Panc1 (cell line): ENCODE measurements at regions of chr3 and their contacts with region 1.

Region 1: DNA sequence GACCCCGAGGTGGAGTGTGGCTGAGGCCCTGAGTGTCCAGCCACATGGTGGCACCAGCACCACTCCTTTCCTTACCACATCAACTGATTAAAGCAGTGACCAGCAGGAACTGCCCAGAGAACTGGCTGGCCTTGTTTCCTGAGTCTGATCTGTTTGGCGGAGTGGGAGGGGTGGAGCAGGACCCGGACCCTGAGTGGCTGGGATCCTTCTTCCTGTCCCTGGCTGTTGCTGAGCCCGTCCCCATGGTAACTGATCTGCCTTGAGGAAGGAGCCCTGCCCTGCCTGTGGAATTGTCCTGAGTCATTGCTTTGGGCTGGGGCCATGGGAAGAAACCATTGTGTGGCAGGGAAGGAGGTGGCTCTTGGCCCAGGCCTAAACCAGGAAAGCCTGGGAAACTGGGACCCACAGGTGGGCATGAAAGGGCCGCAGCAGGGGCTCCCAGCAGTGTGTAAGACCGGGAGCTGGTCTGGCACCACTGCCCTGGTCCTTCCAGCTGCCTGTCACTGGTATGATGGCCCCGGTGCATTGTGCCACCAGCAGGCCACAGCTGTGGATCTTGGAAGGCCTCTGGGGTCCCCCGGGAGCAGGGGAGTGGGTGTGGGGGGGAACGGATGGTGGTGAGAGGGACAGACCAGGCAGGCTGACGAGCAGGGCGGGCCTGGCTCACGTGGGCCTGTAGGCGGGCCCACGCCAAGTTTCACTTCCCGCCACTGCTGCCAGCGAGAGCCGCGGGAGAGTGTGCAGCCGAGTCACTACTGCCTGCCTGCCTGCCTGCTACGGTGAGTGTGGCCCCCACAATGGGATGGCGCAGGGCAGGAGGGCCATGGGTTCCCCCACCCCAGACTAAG is 19.2 kb downstream of the ATRIP start:
- DNase-seq: peak; percentile 80
- ATAC-seq: peak; percentile 79
- H3K4me3 ChIP-seq: peak overlapping the region; percentile 1 to 18; a peak in 2 of 4 replicates
- H3K27ac ChIP-seq: peak overlapping the region; percentile 65
- H3K4me1 ChIP-seq: peaks cover 10% of the 10 kb centered on the region
- H3K27me3 ChIP-seq: no peaks in the 10 kb centered on the region
- CTCF ChIP-seq: peak; percentile 79

Region 2: GRCh38 chr3:48446425-48447193 is 19.1 kb before region 1 on chr3 and contains the start of gene ATRIP:
- CTCF ChIA-PET with region 1: no interaction called
- POLR2A ChIA-PET with region 1: interaction called, 23 read pairs
- in situ Hi-C with region 1: no loop called
- intact Hi-C with region 1: no loop called
- DNase-seq: no peak
- ATAC-seq: peak; percentile 95
- H3K4me3 ChIP-seq: peak within 1 kb of the TSS; percentile 76 to 87
- H3K27ac ChIP-seq: peak within 1 kb of the TSS; percentile 89
- H3K4me1 ChIP-seq: peaks cover 11% of the 10 kb centered on the region
- H3K27me3 ChIP-seq: no peaks in the 10 kb centered on the region
- CTCF ChIP-seq: no peak
- total RNA-seq, gene ATRIP: 11.9 TPM

Region 3: GRCh38 chr3:48548729-48549705 is 83.3 kb after region 1 on chr3:
- CTCF ChIA-PET with region 1: interaction called, 5 read pairs
- POLR2A ChIA-PET with region 1: no interaction called
- in situ Hi-C with region 1: no loop called
- intact Hi-C with region 1: loop called (anchors 5 kb)
- DNase-seq: no peak
- ATAC-seq: peak; percentile 98
- H3K4me3 ChIP-seq: no peak overlapping the region
- H3K27ac ChIP-seq: no peak overlapping the region
- H3K4me1 ChIP-seq: no peaks in the 10 kb centered on the region
- H3K27me3 ChIP-seq: no peaks in the 10 kb centered on the region
- CTCF ChIP-seq: peak; percentile 90

Region 4: DNA sequence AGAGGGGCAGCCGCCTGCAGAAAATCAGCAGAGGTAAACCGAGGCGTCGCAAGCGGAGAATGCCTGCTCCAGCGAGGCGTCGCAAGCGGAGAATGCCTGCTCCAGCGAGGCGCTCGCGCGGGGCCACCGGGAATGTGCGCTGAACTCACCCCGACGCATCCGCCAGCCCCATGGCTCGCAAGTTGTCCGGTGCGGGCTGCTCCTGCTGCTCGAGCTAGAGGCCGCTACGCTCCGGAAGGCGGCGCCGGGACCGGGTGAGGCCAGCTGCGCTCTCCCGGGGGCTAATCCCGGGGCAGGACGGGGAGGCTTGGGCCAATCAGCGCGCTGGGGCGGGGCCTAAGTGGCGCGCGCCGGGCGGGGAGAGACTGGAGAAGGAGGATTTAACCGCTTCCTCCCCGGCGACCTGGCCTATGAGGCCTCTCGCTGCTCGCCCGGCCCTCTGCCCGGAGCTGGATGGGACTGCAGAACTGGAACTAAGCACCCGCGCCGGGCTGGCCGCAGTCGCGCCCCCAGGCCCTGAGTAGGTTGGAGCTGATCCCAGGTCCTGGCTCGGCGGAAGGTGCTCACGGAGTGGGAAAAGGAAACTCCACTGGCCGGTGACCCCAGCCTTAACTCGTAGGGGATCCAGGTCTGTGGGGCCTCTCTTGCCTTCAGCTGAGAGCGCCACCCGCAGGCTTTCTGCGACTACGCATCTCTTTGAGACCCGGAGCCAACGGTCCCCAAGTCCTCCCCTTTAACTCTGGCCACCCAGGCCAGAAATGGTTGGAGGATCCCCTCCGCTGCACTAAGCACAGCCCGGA is 169.7 kb after region 1 on chr3 and contains the start of gene SLC26A6:
- CTCF ChIA-PET with region 1: no interaction called
- POLR2A ChIA-PET with region 1: no interaction called
- in situ Hi-C with region 1: no loop called
- intact Hi-C with region 1: no loop called
- DNase-seq: peak; percentile 56
- ATAC-seq: peak; percentile 97
- H3K4me3 ChIP-seq: peak within 1 kb of the TSS; percentile 74 to 85
- H3K27ac ChIP-seq: peak within 1 kb of the TSS; percentile 87
- H3K4me1 ChIP-seq: peaks cover 18% of the 10 kb centered on the region
- H3K27me3 ChIP-seq: no peaks in the 10 kb centered on the region
- CTCF ChIP-seq: peak; percentile 78
- total RNA-seq, gene SLC26A6: 36.3 TPM

Region 5: GRCh38 chr3:49719214-49719884 is 1253.6 kb after region 1 on chr3 and contains the start of gene AMIGO3:
- CTCF ChIA-PET with region 1: no interaction called
- POLR2A ChIA-PET with region 1: no interaction called
- in situ Hi-C with region 1: no loop called
- intact Hi-C with region 1: no loop called
- DNase-seq: peak; percentile 22
- ATAC-seq: peak; percentile 68
- H3K4me3 ChIP-seq: peak within 1 kb of the TSS; percentile 24 to 31
- H3K27ac ChIP-seq: peak within 1 kb of the TSS; percentile 17; the same call in 1 of the 2 replicates
- H3K4me1 ChIP-seq: peaks cover 9% of the 10 kb centered on the region
- H3K27me3 ChIP-seq: no peaks in the 10 kb centered on the region
- CTCF ChIP-seq: no peak; the same call in 1 of the 2 replicates
- total RNA-seq, gene AMIGO3: 0.72 TPM